ENCODE measurements at regions of chr14 and their contacts with region 1.

Region 1: DNA sequence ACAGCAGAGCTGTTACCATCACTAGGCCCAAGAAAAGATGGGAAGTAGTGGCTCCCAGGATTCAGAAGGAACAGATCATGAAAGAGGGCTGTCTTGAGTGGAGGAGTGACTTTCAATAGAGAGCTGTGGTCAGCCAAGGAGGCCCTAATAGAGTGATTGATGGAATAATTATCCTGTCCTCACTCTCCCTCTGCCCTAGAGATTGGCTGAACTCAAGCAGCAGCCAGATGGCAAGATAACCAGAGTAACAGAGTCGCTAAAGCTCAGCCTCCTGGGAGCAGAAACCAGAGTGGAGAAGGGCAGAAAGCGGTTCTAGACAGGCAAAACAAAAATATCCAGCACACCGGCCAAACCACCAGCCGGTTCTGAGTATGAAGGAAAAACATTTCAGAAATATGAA is 23.1 kb downstream of the GMFB start:
- DNase-seq: no peak
- ATAC-seq: no peak
- H3K4me3 ChIP-seq: no peak overlapping the region
- H3K27ac ChIP-seq: no peak overlapping the region
- H3K4me1 ChIP-seq: no peaks in the 10 kb centered on the region
- H3K27me3 ChIP-seq: no peaks in the 10 kb centered on the region
- CTCF ChIP-seq: no peak
- POLR2A ChIP-seq: no peak

Region 2: DNA sequence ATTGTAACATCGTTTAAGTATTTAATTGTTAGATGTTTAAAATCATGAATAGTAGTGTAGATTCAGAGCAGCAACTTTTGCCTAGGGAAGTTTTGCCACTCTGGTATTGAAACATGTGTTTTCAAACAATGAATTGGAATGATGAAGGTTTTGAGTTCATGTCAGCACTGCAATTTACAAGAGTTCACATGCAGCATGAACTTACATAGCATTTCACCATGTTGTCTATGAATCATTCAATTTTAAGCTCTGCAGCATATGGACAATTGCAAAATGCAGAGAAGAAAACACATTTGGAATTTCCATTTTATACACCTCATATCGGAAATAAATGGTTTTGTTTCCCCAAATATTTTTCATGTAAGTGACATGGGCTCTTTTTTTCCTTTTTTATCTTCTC is 239.6 kb before region 1 on chr14:
- in situ Hi-C with region 1: no loop called
- intact Hi-C with region 1: loop called (anchors 5 kb)
- DNase-seq: no peak
- ATAC-seq: no peak
- H3K4me3 ChIP-seq: no peak overlapping the region
- H3K27ac ChIP-seq: no peak overlapping the region
- H3K4me1 ChIP-seq: no peaks in the 10 kb centered on the region
- H3K27me3 ChIP-seq: no peaks in the 10 kb centered on the region
- CTCF ChIP-seq: no peak
- POLR2A ChIP-seq: no peak

Region 3: GRCh38 chr14:54347997-54348611 is 117.5 kb before region 1 on chr14:
- in situ Hi-C with region 1: no loop called
- intact Hi-C with region 1: no loop called
- DNase-seq: no peak
- ATAC-seq: peak in 1 of 2 donors; percentile 36
- H3K4me3 ChIP-seq: no peak overlapping the region
- H3K27ac ChIP-seq: no peak overlapping the region
- H3K4me1 ChIP-seq: peaks cover 2 to 12% of the 10 kb centered on the region in 2 donors
- H3K27me3 ChIP-seq: peaks cover 6 to 12% (median 7%) of the 10 kb centered on the region in 3 donors
- CTCF ChIP-seq: peak; percentile 8 to 54 (median 45)
- POLR2A ChIP-seq: no peak

Measured in gastrocnemius medialis (tissue), 4 donors.